Motor neuron (in vitro differentiated cells): ENCODE measurements at regions of chr4 and their contacts with region 1.

Region 1: GRCh38 chr4:158856852-158857251 is 88.0 kb downstream of the FNIP2 start:
- ATAC-seq: peak; percentile 64 to 93 (median 80)
- H3K4me3 ChIP-seq: no peak overlapping the region
- H3K27ac ChIP-seq: no peak overlapping the region
- H3K4me1 ChIP-seq: peaks cover 0 to 7% of the 10 kb centered on the region in 2 donors

Region 2: GRCh38 chr4:158729716-158730559 is 126.9 kb before region 1 on chr4:
- in situ Hi-C with region 1: loop called in 1 of 9 experiments (anchors 10 kb)
- ATAC-seq: peak; percentile 68 to 96 (median 86)
- H3K4me3 ChIP-seq: no peak overlapping the region
- H3K27ac ChIP-seq: no peak overlapping the region
- H3K4me1 ChIP-seq: no peaks in the 10 kb centered on the region

Region 3: GRCh38 chr4:159051245-159052071 is 194.6 kb after region 1 on chr4:
- in situ Hi-C with region 1: no loop called
- ATAC-seq: peak in 2 of 8 experiments; percentile 3 to 19
- H3K4me3 ChIP-seq: no peak overlapping the region
- H3K27ac ChIP-seq: peak overlapping the region in 1 of 2 donors; percentile 40
- H3K4me1 ChIP-seq: peaks cover 37 to 57% of the 10 kb centered on the region in 2 donors

Region 4: DNA sequence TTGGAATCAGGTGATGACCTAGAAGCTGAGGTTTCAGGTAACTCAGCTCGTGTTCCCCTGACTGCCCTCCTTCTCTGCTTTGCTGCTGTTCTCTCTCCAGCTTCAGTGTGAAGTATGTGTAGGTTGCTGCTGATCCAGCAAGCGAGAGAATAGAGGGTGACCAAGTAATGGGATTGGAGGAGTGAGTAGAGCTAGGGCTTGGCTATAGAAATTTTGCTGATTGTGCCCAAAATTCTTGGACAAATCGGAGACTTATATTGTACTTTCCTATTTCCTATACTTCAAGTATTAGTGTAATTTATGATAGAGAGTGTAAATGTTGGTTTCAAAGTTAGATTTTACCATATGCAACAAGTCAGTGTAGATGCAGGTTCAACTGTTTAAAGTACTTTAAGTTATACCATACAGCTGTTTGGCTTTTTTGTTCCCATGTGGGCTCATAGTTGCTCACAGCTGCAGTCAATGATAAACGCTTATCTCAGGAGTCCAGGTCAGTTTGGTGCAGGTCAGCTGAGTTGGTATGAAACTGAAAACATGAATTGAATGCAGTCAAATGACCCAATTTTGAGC is 294.1 kb after region 1 on chr4:
- in situ Hi-C with region 1: loop called in 1 of 9 experiments (anchors 25 kb)
- ATAC-seq: no peak
- H3K4me3 ChIP-seq: no peak overlapping the region
- H3K27ac ChIP-seq: no peak overlapping the region
- H3K4me1 ChIP-seq: peaks cover 0 to 2% of the 10 kb centered on the region in 2 donors

Region 5: GRCh38 chr4:159175085-159175988 is 318.5 kb after region 1 on chr4:
- in situ Hi-C with region 1: loop called in 5 of 9 experiments (anchors 25 kb)
- ATAC-seq: peak; percentile 89 to 98 (median 96)
- H3K4me3 ChIP-seq: peak overlapping the region in 4 of 5 donors; percentile 7 to 32 (median 22)
- H3K27ac ChIP-seq: peak overlapping the region; percentile 9 to 26
- H3K4me1 ChIP-seq: peaks cover 15 to 26% of the 10 kb centered on the region in 2 donors

Region 6: DNA sequence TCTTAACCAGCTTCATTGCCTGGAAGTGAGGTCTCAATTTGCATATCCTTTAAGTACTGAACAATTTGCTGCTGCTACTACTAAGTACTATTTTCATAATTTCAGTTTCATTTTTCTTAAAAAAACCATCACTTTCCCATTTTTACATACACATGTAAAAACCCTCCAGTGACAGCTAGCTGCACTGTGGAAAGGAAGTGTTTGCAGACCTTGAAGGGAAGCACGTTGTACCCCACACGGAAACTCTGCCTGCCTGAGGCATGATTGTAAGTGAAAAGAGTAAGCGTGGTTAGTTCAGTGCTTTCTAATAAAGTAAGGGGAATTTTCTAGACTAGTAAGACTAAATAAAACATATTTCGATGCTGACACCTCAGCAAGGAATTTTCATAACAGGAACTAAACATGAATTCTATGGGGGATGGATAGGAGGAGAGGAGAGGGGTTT is 349.6 kb after region 1 on chr4:
- in situ Hi-C with region 1: loop called in 2 of 9 experiments (anchors 10 to 25 kb)
- ATAC-seq: no peak
- H3K4me3 ChIP-seq: no peak overlapping the region
- H3K27ac ChIP-seq: no peak overlapping the region
- H3K4me1 ChIP-seq: no peaks in the 10 kb centered on the region

Region 7: GRCh38 chr4:159446266-159446976 is 589.6 kb after region 1 on chr4:
- in situ Hi-C with region 1: loop called in 2 of 9 experiments (anchors 25 kb)
- ATAC-seq: peak; percentile 98 to 100 (median 100)
- H3K4me3 ChIP-seq: no peak overlapping the region
- H3K27ac ChIP-seq: no peak overlapping the region
- H3K4me1 ChIP-seq: peaks cover 0 to 8% of the 10 kb centered on the region in 2 donors